WTC11 (cell line): ENCODE measurements at regions of chr19 and their contacts with region 1.

Region 1: DNA sequence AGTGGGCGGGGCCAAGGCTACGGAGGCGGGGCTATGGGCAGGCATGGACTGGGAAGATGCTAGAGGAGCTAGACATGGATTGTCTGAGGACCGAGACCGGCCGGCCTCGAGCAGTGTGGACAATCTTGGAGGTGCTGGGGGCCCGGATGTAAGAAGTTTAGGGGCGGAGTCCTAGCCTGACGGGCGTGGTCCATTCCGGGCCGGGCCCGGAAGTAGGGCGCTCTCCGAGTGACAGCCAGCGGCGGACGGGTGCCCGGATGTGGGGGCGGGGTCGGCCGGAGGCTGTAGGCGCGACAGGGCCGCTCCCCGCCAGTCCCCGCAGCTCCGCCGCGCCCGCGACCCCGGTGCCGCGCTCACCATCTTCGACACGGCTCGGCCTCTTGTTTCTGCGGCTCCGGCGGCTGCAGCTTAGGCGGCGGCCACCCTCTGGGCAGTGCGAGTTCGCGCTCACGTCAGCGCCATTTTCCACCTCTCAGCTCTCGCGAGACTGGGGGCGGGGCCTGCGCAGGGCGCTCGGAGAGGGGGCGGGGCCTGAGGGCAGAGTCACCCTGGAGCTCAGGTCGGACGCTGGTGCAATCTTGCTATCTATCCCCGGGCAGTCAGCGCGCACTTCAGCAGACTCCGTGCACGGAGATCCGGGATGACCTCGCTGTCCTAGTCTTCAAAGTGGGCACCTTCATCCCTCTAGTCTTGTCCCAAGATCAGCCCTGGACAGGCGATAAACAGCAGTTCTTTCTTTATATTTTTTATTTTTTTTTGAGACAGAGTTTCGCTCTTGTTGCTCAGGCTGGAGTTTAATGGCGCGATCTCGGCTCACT is at the start of gene ZNF414:
- DNase-seq: peak; percentile 100
- ATAC-seq: peak; percentile 87
- H3K4me3 Mint-ChIP-seq: peak within 1 kb of the TSS; percentile 86
- H3K27ac Mint-ChIP-seq: peak within 1 kb of the TSS; percentile 100
- H3K4me1 Mint-ChIP-seq: peaks cover 16% of the 10 kb centered on the region
- H3K27me3 Mint-ChIP-seq: peaks cover 6% of the 10 kb centered on the region; the same call in 1 of the 2 replicates
- CTCF ChIP-seq: no peak
- total RNA-seq, gene ZNF414: 38.2 to 47.4 TPM (median 46.1 TPM) in 3 replicates

Region 2: GRCh38 chr19:8526345-8527067 is 12.6 kb after region 1 on chr19:
- CTCF ChIA-PET with region 1: interaction called, 39 read pairs
- POLR2A ChIA-PET with region 1: interaction called, 28 read pairs
- DNase-seq: peak; percentile 95
- ATAC-seq: peak; percentile 48
- H3K4me3 Mint-ChIP-seq: no peak overlapping the region
- H3K27ac Mint-ChIP-seq: no peak overlapping the region
- H3K4me1 Mint-ChIP-seq: peaks cover 19% of the 10 kb centered on the region
- H3K27me3 Mint-ChIP-seq: peaks cover 6% of the 10 kb centered on the region
- CTCF ChIP-seq: no peak

Region 3: GRCh38 chr19:8585894-8586750 is 72.2 kb after region 1 on chr19:
- CTCF ChIA-PET with region 1: interaction called, 75 read pairs
- POLR2A ChIA-PET with region 1: interaction called, 9 read pairs
- DNase-seq: peak; percentile 99
- ATAC-seq: peak; percentile 87
- H3K4me3 Mint-ChIP-seq: no peak overlapping the region
- H3K27ac Mint-ChIP-seq: no peak overlapping the region
- H3K4me1 Mint-ChIP-seq: peaks cover 4% of the 10 kb centered on the region; the same call in 1 of the 2 replicates
- H3K27me3 Mint-ChIP-seq: peaks cover 29% of the 10 kb centered on the region
- CTCF ChIP-seq: peak; percentile 93